ENCODE measurements at regions of chr13 and their contacts with region 1.

Region 1: GRCh38 chr13:97975848-97976609 is 22.6 kb downstream of the IPO5 start:
- DNase-seq: no peak
- ATAC-seq: peak; percentile 96
- H3K4me3 ChIP-seq: peak overlapping the region; percentile 74 to 86
- H3K27ac ChIP-seq: peak overlapping the region; percentile 81
- H3K4me1 ChIP-seq: peaks cover 11% of the 10 kb centered on the region
- H3K27me3 ChIP-seq: no peaks in the 10 kb centered on the region
- CTCF ChIP-seq: no peak

Region 2: DNA sequence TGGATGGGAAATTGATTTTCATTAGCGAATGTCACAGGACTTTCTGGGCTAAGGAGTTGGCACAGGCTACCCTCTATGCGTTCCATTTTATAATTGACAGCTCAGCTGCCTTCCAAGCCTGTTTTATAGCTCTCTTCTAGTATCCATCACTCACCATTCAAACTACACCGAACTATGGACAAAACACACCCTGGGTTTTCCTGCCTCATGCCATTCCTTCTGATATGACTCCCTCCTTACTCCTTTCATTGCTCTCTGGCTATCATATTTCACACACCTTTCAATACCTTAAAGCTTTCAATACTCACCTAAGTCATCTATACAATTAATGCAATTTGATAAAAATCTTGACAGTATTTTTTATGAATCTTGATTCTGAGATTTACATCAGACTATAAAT is 360.8 kb before region 1 on chr13:
- CTCF ChIA-PET with region 1: no interaction called
- POLR2A ChIA-PET with region 1: interaction called, 11 read pairs
- in situ Hi-C with region 1: no loop called
- intact Hi-C with region 1: no loop called
- DNase-seq: no peak
- ATAC-seq: no peak
- H3K4me3 ChIP-seq: no peak overlapping the region
- H3K27ac ChIP-seq: no peak overlapping the region
- H3K4me1 ChIP-seq: no peaks in the 10 kb centered on the region
- H3K27me3 ChIP-seq: peaks cover 3% of the 10 kb centered on the region; the same call in 1 of the 2 replicates
- CTCF ChIP-seq: no peak

Region 3: DNA sequence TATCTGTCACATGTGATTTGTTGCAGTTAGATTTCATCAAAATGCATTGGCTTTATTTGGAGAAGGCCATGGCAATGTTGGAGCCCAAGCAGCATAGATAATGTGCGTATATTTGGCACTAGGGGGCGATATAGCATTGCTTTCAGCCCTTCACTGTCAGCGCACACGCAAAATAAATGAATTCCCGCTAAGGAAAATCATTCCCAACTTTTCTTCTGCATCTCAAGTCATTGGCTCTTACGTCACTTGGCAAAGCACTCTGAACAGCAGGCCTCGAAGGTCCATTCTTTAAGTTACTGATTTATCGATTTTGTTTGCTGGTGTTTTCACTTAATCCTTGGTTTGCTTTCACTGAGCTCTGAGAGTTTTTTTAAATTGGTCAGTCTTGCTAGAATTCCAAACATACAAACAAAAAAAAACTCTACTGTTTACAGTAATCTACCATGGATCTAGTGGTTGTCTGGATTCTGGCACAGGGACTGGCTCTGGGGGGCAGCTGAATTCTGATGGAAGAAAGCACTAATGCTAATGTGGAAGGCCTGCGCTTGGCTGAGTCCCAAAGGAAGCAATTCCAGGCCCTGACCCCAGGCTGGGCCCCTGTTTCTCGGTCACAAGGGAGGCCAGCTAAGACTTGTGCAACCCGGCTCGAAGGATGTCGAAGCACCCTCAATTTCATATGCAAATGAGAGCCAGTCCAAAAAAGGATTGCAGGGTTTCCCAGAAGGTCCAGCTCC is 120.3 kb before region 1 on chr13:
- CTCF ChIA-PET with region 1: no interaction called
- POLR2A ChIA-PET with region 1: no interaction called
- in situ Hi-C with region 1: no loop called
- intact Hi-C with region 1: loop called (anchors 10 kb)
- DNase-seq: peak; percentile 18
- ATAC-seq: peak; percentile 95
- H3K4me3 ChIP-seq: no peak overlapping the region
- H3K27ac ChIP-seq: no peak overlapping the region
- H3K4me1 ChIP-seq: no peaks in the 10 kb centered on the region
- H3K27me3 ChIP-seq: no peaks in the 10 kb centered on the region
- CTCF ChIP-seq: peak; percentile 83

Region 4: GRCh38 chr13:98083507-98083906 is 107.5 kb after region 1 on chr13:
- CTCF ChIA-PET with region 1: no interaction called
- POLR2A ChIA-PET with region 1: no interaction called
- in situ Hi-C with region 1: no loop called
- intact Hi-C with region 1: no loop called
- DNase-seq: no peak
- ATAC-seq: no peak
- H3K4me3 ChIP-seq: no peak overlapping the region
- H3K27ac ChIP-seq: no peak overlapping the region
- H3K4me1 ChIP-seq: no peaks in the 10 kb centered on the region
- H3K27me3 ChIP-seq: no peaks in the 10 kb centered on the region
- CTCF ChIP-seq: no peak